ENCODE measurements at regions of chr6 and their contacts with region 1.

Region 1: DNA sequence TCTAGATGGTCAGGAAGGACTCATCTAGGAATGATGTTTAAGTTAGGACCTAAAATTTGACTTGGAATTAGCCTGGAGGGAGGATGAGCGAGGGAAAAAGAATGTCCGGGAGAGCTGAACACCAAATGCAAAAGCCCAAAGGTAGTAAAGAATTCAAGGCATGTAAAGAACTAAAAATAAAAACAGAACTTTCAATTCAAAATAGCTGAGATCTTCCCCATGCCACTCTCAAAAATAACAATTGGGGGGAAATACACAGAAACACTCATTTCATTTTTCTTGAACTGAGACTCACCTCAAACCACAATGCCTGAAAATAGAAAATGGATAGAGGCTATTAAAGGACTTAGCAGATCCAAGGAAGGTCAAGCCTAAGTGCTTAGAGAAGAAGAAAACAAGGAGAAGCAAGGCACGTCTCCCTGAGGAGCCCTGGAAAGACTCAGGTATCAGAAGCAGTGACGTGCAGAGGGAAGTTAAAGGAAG is 10.5 kb downstream of the PXT1 start:
- DNase-seq: no peak
- ATAC-seq: no peak
- H3K4me3 ChIP-seq: no peak overlapping the region
- H3K27ac ChIP-seq: no peak overlapping the region
- H3K4me1 ChIP-seq: peaks cover 0 to 14% of the 10 kb centered on the region in 2 experiments; a peak in 2 of 4 replicates
- H3K27me3 ChIP-seq: no peaks in the 10 kb centered on the region
- CTCF ChIP-seq: no peak
- POLR2A ChIP-seq: no peak
- RAD21 ChIP-seq: no peak

Region 2: GRCh38 chr6:36442671-36443470 is 10.7 kb after region 1 on chr6 and contains the starts of genes KCTD20 and PXT1:
- CTCF ChIA-PET with region 1: interaction called, 3 read pairs
- POLR2A ChIA-PET with region 1: interaction called, 12 read pairs
- RAD21 ChIA-PET with region 1: no interaction called
- intact Hi-C with region 1: no loop called
- DNase-seq: peak; percentile 75
- ATAC-seq: peak; percentile 79
- H3K4me3 ChIP-seq: peak within 1 kb of the TSS; percentile 76 to 84
- H3K27ac ChIP-seq: peak within 1 kb of the TSS; percentile 96
- H3K4me1 ChIP-seq: peaks cover 19 to 32% of the 10 kb centered on the region in 2 experiments
- H3K27me3 ChIP-seq: no peaks in the 10 kb centered on the region
- CTCF ChIP-seq: no peak
- POLR2A ChIP-seq: peak; percentile 57
- RAD21 ChIP-seq: no peak
- total RNA-seq, gene KCTD20: 23.7 TPM
- total RNA-seq, gene PXT1: 0.17 TPM

Region 3: DNA sequence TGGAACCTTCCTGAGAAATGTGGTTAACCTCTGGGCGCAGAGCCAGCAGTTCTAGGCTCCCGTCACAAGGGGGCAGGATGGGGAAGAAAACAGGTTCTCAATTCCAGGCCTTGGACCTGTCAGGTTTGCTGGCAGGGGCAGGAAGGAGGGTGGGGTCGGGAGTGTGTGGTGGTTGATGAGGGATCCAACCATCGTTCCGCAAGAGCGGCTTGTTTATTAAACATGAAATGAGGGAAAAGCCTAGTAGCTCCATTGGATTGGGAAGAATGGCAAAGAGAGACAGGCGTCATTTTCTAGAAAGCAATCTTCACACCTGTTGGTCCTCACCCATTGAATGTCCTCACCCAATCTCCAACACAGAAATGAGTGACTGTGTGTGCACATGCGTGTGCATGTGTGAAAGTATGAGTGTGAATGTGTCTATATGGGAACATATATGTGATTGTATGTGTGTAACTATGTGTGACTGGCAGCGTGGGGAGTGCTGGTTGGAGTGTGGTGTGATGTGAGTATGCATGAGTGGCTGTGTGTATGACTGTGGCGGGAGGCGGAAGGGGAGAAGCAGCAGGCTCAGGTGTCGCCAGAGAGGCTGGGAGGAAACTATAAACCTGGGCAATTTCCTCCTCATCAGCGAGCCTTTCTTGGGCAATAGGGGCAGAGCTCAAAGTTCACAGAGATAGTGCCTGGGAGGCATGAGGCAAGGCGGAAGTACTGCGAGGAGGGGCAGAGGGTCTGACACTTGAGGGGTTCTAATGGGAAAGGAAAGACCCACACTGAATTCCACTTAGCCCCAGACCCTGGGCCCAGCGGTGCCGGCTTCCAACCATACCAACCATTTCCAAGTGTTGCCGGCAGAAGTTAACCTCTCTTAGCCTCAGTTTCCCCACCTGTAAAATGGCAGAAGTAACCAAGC is 191.6 kb after region 1 on chr6:
- CTCF ChIA-PET with region 1: no interaction called
- POLR2A ChIA-PET with region 1: no interaction called
- RAD21 ChIA-PET with region 1: no interaction called
- intact Hi-C with region 1: no loop called
- DNase-seq: peak; percentile 58
- ATAC-seq: peak; percentile 92
- H3K4me3 ChIP-seq: no peak overlapping the region
- H3K27ac ChIP-seq: no peak overlapping the region
- H3K4me1 ChIP-seq: peaks cover 0 to 11% of the 10 kb centered on the region in 2 experiments; a peak in 2 of 4 replicates
- H3K27me3 ChIP-seq: no peaks in the 10 kb centered on the region
- CTCF ChIP-seq: peak; percentile 92 to 96 (median 93)
- POLR2A ChIP-seq: no peak
- RAD21 ChIP-seq: peak; percentile 98